Left cardiac atrium (tissue), 4 donors: ENCODE measurements at regions of chr19 and their contacts with region 1.

Region 1: GRCh38 chr19:19531951-19532805 is 3.5 kb downstream of the YJEFN3 start:
- DNase-seq: peak; percentile 90
- ATAC-seq: peak; percentile 71 to 75

Region 2: GRCh38 chr19:19643158-19644053 is 111.2 kb after region 1 on chr19 and contains the start of gene GMIP:
- intact Hi-C with region 1: loop called (anchors 1 to 5 kb)
- DNase-seq: peak; percentile 81
- ATAC-seq: peak; percentile 90 to 93
- total RNA-seq, gene GMIP: 5.8 to 7.5 TPM

Region 3: GRCh38 chr19:19649580-19650242 is 117.5 kb after region 1 on chr19:
- intact Hi-C with region 1: loop called (anchors 1 to 5 kb)
- DNase-seq: no peak
- ATAC-seq: no peak

Region 4: DNA sequence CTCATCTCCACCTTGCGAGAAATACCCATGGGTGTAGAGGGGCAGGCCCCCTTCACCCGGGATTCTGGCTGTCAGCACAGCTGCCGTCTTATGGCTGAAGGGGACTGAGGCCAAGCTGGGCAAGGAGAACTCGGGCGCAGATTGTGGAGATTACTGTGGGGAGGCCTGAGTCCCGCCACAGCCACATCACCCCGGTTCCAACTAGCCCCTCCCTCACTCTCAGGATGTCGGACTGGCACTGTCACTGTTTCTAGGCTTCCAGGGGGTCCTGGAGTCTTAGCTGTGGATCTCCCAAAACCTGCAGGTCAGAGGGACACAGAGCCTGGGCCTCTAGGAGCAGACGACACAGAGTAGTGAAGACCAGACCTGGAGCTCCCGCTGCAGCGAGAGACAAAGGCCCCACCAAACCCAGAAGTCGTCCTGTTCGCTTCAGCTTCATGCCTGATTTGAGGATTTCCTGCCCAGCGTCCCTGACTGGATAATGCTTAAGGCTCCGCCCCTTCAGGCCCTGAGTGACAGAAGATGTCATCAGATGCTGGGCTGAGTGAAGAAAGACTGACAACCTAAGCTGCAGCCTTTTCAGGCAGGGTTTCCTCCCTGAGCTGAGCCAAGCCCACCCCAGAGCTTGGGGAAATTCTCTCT is 424.4 kb after region 1 on chr19:
- intact Hi-C with region 1: loop called in 1 of 2 experiments (anchors 5 kb)
- DNase-seq: no peak
- ATAC-seq: no peak